ENCODE measurements at regions of chr17 and their contacts with region 1.

Region 1: GRCh38 chr17:69358688-69359596 is 32.0 kb upstream of the ABCA5 start:
- DNase-seq: no peak
- H3K4me3 ChIP-seq: no peak overlapping the region
- H3K27ac ChIP-seq: no peak overlapping the region
- H3K4me1 ChIP-seq: no peaks in the 10 kb centered on the region
- H3K27me3 ChIP-seq: no peaks in the 10 kb centered on the region
- CTCF ChIP-seq: no peak
- POLR2A ChIP-seq: no peak

Region 2: GRCh38 chr17:67491009-67491680 is 1867.8 kb before region 1 on chr17:
- intact Hi-C with region 1: no loop called
- DNase-seq: peak; percentile 47 to 69
- H3K4me3 ChIP-seq: peak overlapping the region in 2 of 3 donors; percentile 2 to 9
- H3K27ac ChIP-seq: no peak overlapping the region
- H3K4me1 ChIP-seq: no peaks in the 10 kb centered on the region
- H3K27me3 ChIP-seq: no peaks in the 10 kb centered on the region
- CTCF ChIP-seq: no peak
- POLR2A ChIP-seq: no peak

Region 3: GRCh38 chr17:69327060-69327831 is 31.7 kb before region 1 on chr17 and contains the start of gene ABCA5:
- intact Hi-C with region 1: no loop called
- DNase-seq: peak; percentile 85 to 88
- H3K4me3 ChIP-seq: peak within 1 kb of the TSS; percentile 65 to 82 (median 66)
- H3K27ac ChIP-seq: peak within 1 kb of the TSS; percentile 87 to 90
- H3K4me1 ChIP-seq: no peaks in the 10 kb centered on the region
- H3K27me3 ChIP-seq: no peaks in the 10 kb centered on the region
- CTCF ChIP-seq: no peak
- POLR2A ChIP-seq: peak; percentile 24
- total RNA-seq, gene ABCA5: 88.8 to 152 (median 93.1) TPM

Region 4: GRCh38 chr17:69407771-69408170 is 48.8 kb after region 1 on chr17:
- intact Hi-C with region 1: loop called (anchors 2 kb)
- DNase-seq: no peak
- H3K4me3 ChIP-seq: no peak overlapping the region
- H3K27ac ChIP-seq: no peak overlapping the region
- H3K4me1 ChIP-seq: no peaks in the 10 kb centered on the region
- H3K27me3 ChIP-seq: no peaks in the 10 kb centered on the region
- CTCF ChIP-seq: no peak
- POLR2A ChIP-seq: no peak